Calu3 (cell line): ENCODE measurements at regions of chr2 and their contacts with region 1.

Region 1: DNA sequence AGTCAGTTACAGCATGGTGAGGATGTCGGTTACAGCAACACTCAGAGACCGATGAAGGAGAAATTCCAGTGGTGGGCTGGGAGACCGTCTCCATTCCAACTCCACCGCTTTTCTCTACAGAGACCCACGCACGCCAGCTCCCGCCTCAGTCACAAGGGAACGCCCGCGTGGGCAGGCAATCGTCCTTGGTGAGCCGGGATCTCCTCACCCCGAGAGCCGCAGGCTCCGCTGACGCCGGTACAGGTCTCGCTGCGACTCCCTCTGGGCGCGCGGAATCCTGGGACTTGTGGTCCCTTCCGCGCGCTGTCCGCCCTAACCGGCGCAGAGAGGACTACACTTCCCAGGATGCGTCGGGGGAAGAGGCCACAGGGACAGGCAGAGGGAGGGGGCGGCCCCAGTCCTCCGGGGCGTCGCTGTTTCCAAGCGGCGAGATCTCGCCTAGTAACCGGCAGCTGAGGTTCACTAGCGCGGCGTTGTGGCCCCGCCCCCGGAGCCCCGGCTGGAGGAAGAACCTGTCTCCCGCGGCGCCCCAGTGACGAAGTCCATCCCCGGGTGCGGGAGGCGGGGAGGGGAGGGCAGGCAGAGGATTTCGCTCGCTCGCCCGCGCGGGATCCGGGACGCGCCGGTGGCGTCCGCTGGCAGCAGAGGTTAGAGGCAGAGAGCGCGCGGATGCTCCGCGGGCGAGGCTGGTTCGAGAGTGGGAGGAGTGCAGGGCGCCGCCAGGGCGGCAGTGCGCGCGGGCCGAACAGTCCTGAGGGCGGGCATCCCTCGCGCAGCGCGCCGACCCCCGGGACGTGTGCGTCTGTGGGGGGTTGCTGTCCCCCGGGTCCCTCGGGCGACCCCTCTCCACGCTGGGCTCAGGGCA is at the start of gene EML6:
- DNase-seq: peak; percentile 98
- H3K4me3 Mint-ChIP-seq: peak within 1 kb of the TSS; percentile 91
- H3K27ac Mint-ChIP-seq: peak within 1 kb of the TSS; percentile 44
- H3K4me1 Mint-ChIP-seq: peaks cover 10% of the 10 kb centered on the region
- H3K27me3 Mint-ChIP-seq: peaks cover 59% of the 10 kb centered on the region
- CTCF ChIP-seq: peak; percentile 39
- total RNA-seq, gene EML6: 0.45 and 1.1 TPM in 2 replicates

Region 2: GRCh38 chr2:54665436-54665856 is 57.9 kb before region 1 on chr2:
- CTCF ChIA-PET with region 1: no interaction called
- intact Hi-C with region 1: no loop called
- DNase-seq: peak; percentile 40
- H3K4me3 Mint-ChIP-seq: no peak overlapping the region
- H3K27ac Mint-ChIP-seq: no peak overlapping the region
- H3K4me1 Mint-ChIP-seq: peaks cover 9% of the 10 kb centered on the region
- H3K27me3 Mint-ChIP-seq: no peaks in the 10 kb centered on the region
- CTCF ChIP-seq: peak; percentile 38

Region 3: GRCh38 chr2:54767921-54768320 is 44.6 kb after region 1 on chr2:
- CTCF ChIA-PET with region 1: no interaction called
- intact Hi-C with region 1: loop called (anchors 1 kb)
- DNase-seq: no peak
- H3K4me3 Mint-ChIP-seq: no peak overlapping the region
- H3K27ac Mint-ChIP-seq: no peak overlapping the region
- H3K4me1 Mint-ChIP-seq: peaks cover 10% of the 10 kb centered on the region
- H3K27me3 Mint-ChIP-seq: no peaks in the 10 kb centered on the region
- CTCF ChIP-seq: no peak

Region 4: GRCh38 chr2:54838585-54839035 is 115.2 kb after region 1 on chr2:
- CTCF ChIA-PET with region 1: no interaction called
- intact Hi-C with region 1: loop called (anchors 2 kb)
- DNase-seq: peak; percentile 63
- H3K4me3 Mint-ChIP-seq: no peak overlapping the region
- H3K27ac Mint-ChIP-seq: no peak overlapping the region
- H3K4me1 Mint-ChIP-seq: no peaks in the 10 kb centered on the region
- H3K27me3 Mint-ChIP-seq: peaks cover 15% of the 10 kb centered on the region
- CTCF ChIP-seq: peak; percentile 71